Common myeloid progenitor, CD34-positive (primary cell): ENCODE measurements at regions of chr1 and their contacts with region 1.

Region 1: DNA sequence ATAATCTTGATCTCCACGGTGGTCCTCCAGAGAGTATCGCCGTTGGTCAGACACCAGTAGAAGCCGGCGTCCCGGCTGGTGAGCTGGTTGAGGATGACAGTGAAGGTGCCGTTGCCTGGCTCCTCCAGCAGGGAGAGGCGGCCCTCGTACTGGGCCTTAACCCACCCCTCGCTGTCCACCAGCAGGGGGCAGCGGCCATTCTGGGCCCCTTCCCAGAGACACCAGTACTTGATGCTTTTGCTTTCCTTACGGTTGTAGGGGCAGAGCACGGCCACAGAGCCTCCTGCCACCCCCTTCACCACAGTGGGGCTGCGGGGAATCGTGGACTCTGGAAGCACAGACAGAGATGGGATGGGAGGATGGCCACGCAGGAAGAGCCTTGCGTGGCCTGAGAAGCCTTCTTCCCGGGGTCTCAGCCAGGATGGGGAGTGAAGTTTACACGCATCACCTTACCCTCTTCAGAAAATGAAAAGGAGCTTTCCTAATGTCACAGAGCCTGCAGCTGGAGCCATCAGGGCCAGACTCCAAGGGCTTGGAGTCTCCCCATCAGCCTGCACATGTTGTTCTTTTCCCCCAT is 10.7 kb downstream of the PIGR start:
- DNase-seq: peak; percentile 72 to 87 (median 85)
- H3K4me3 ChIP-seq: no peak overlapping the region
- H3K27ac ChIP-seq: no peak overlapping the region
- H3K4me1 ChIP-seq: peaks cover under 1 to 2% (median 2%) of the 10 kb centered on the region in 4 experiments
- H3K27me3 ChIP-seq: no peaks in the 10 kb centered on the region

Region 2: GRCh38 chr1:206784471-206784903 is 151.1 kb before region 1 on chr1:
- CTCF ChIA-PET with region 1: no interaction called
- POLR2A ChIA-PET with region 1: no interaction called
- DNase-seq: no peak
- H3K4me3 ChIP-seq: no peak overlapping the region
- H3K27ac ChIP-seq: no peak overlapping the region
- H3K4me1 ChIP-seq: peaks cover 12 to 60% (median 23%) of the 10 kb centered on the region in 4 experiments
- H3K27me3 ChIP-seq: no peaks in the 10 kb centered on the region

Region 3: DNA sequence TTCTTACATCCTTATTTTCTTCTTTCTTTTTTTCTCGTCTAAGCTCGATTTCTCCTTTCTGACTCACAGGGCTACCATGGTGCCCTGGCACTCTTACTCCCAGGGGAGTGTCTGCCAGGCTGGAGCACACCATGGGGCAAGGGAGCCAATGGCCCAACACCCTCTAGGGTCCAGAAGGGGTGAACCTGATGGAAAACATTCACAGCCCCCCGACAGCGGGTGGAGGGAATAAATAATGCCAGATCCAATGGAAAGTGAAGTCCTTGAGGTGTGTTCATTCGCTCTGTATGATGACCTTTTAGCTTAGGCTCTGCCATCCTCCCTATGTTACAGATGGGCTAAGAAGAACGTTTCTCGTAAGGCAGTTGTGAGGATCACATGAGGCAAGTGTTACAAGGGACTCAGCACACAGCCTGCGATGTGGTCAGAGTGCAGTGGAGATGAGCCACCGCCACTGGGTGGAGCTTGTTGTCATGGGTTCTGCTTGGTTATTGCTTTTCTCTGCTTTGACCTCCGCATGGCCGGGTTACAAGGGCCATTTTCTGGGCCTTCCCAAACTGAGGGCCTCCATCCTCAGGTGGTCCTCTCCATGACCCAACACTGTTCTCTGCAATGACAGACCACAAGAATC is 10.4 kb before region 1 on chr1:
- CTCF ChIA-PET with region 1: interaction called, 111 read pairs
- POLR2A ChIA-PET with region 1: no interaction called
- DNase-seq: peak in 1 of 3 donors; percentile 57
- H3K4me3 ChIP-seq: no peak overlapping the region
- H3K27ac ChIP-seq: no peak overlapping the region
- H3K4me1 ChIP-seq: peaks cover 20 to 49% (median 46%) of the 10 kb centered on the region in 4 experiments
- H3K27me3 ChIP-seq: no peaks in the 10 kb centered on the region

Region 4: DNA sequence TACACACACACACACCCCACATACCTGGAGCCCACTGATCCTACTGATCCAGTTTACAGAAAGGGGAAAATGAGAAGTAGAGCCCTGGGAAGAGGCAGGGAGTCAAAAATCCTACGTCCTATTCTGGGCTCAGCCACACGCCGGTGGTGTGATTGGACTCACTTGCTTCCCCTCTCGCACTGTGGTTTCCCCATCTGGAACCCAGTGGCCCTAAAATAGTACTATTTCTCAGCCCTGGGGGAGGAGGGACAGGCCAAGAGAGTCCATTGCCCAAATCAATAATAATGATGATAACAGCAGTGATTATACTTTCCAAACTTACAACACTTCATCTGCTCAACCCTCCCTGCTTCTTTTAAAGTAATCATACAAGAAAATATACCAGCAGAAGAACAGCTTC is 13.6 kb after region 1 on chr1:
- CTCF ChIA-PET with region 1: interaction called, 32 read pairs
- POLR2A ChIA-PET with region 1: no interaction called
- DNase-seq: peak in 1 of 3 donors; percentile 37
- H3K4me3 ChIP-seq: peak overlapping the region in 1 of 7 experiments; percentile 27
- H3K27ac ChIP-seq: no peak overlapping the region
- H3K4me1 ChIP-seq: peaks cover 0 to 45% (median 16%) of the 10 kb centered on the region in 4 experiments
- H3K27me3 ChIP-seq: no peaks in the 10 kb centered on the region

Region 5: DNA sequence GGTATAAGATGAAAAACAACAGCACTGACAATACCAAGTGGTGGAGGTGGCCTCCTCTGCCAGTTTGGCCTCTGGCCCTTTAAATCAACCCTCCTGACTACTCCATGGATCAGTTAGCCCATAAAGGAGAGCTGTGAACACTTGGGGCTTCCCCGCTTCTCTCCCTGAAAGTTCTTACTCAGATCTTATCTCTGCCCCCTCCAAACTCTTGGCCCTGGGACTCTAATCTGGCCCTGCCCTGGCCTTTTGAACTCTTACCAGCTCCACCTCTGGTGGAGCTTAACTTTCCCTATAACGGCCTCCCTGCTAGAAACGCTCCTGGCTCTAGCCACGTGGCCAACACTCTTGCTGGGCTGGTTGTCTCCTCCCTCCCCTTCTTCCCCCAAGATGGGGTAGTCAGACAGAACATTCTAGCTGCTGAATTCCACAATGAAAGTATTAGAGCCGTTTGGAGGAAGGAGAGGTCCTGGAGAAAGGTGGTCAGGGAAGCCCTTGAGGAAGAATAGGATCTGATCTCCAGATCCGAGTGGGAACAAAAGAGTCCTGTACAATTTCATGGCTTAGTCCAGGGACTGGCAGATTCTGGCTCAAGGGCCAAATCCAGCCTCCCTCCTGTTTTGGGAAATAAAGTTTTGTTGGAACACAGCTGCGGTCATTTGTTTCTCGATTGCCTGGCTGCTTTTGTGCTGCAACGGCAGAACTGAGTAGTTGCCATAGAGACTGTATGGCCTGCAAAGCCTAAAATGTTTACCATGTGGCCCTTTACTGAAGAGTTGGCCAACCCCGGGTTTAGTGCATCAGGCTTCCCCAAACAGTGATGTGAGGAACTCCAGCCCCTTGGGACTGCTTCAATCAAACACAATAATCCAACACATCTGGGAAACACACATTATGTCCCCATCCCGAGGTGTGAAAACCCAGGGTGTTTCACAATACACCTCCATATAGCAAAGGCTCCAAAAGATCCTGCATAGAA is 20.2 kb after region 1 on chr1:
- CTCF ChIA-PET with region 1: interaction called, 29 read pairs
- POLR2A ChIA-PET with region 1: no interaction called
- DNase-seq: no peak
- H3K4me3 ChIP-seq: no peak overlapping the region
- H3K27ac ChIP-seq: no peak overlapping the region
- H3K4me1 ChIP-seq: peaks cover 0 to 31% (median 9%) of the 10 kb centered on the region in 4 experiments
- H3K27me3 ChIP-seq: no peaks in the 10 kb centered on the region

Region 6: GRCh38 chr1:206962272-206962671 is 26.7 kb after region 1 on chr1:
- CTCF ChIA-PET with region 1: interaction called, 29 read pairs
- POLR2A ChIA-PET with region 1: no interaction called
- DNase-seq: peak in 2 of 3 donors; percentile 67 to 82
- H3K4me3 ChIP-seq: no peak overlapping the region
- H3K27ac ChIP-seq: no peak overlapping the region
- H3K4me1 ChIP-seq: peaks cover 6 to 44% (median 21%) of the 10 kb centered on the region in 4 experiments
- H3K27me3 ChIP-seq: no peaks in the 10 kb centered on the region

Region 7: DNA sequence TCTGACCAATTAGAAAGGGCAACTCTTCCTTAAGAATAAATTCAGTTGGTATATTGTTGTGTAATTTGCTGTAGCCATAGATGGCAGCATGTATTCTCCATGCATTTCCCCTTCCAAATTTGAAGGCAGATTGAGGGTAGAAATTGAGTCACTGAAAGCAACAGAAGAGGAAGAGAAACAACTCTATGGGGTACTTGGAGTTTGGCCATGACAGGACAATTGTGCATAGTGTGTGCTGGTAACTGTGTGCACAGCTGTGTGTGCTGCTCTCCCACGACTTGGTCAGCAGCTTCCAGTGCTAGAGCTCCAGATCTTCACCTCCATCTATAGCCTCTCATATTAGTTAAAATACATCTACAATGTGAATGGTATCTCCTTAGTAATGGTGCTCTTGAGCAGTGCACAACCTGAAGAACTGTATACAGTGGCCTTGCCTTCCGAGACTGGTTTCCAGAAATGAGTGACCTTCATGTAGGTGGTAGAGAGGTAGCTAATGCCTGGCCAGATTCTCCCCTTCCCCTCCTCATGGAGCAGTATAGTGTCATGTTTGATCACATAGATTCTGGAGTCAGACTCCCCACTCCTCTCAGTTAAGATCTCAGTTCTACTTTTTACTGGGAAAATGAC is 35.6 kb after region 1 on chr1:
- CTCF ChIA-PET with region 1: interaction called, 31 read pairs
- POLR2A ChIA-PET with region 1: no interaction called
- DNase-seq: peak in 2 of 3 donors; percentile 19 to 22
- H3K4me3 ChIP-seq: no peak overlapping the region
- H3K27ac ChIP-seq: no peak overlapping the region
- H3K4me1 ChIP-seq: peaks cover 26 to 46% (median 30%) of the 10 kb centered on the region in 4 experiments
- H3K27me3 ChIP-seq: no peaks in the 10 kb centered on the region